ENCODE measurements at regions of chr7 and their contacts with region 1.

Region 1: DNA sequence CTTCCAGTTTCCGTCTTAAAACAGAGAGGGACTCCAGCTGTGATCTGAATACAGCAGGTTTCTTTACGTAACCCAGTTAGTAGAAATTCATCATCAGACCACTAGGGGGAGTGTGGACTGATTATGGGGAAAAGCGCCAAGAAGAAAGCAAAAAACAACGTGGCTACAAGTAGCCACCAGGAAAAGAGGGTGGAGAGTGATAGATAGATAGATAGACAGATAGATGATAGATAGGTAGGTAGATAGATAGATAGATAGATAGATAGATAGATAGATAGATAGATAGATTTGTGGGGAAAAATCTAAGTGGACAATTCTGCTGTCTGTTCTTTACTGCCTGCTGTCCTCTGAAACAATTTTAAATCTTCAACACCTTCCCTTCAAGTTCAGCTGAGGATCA is 12.7 kb upstream of the AKR1B10 start:
- ATAC-seq: peak in 4 of 8 experiments; percentile 52 to 81 (median 58)
- H3K4me3 ChIP-seq: no peak overlapping the region
- H3K27ac ChIP-seq: no peak overlapping the region
- H3K4me1 ChIP-seq: no peaks in the 10 kb centered on the region

Region 2: GRCh38 chr7:134432296-134433152 is 82.1 kb before region 1 on chr7:
- in situ Hi-C with region 1: loop called in 1 of 9 experiments (anchors 10 kb)
- ATAC-seq: peak; percentile 94 to 99 (median 98)
- H3K4me3 ChIP-seq: peak overlapping the region; percentile 12 to 24 (median 19)
- H3K27ac ChIP-seq: no peak overlapping the region
- H3K4me1 ChIP-seq: peaks cover 0 to 3% of the 10 kb centered on the region in 2 donors

Region 3: DNA sequence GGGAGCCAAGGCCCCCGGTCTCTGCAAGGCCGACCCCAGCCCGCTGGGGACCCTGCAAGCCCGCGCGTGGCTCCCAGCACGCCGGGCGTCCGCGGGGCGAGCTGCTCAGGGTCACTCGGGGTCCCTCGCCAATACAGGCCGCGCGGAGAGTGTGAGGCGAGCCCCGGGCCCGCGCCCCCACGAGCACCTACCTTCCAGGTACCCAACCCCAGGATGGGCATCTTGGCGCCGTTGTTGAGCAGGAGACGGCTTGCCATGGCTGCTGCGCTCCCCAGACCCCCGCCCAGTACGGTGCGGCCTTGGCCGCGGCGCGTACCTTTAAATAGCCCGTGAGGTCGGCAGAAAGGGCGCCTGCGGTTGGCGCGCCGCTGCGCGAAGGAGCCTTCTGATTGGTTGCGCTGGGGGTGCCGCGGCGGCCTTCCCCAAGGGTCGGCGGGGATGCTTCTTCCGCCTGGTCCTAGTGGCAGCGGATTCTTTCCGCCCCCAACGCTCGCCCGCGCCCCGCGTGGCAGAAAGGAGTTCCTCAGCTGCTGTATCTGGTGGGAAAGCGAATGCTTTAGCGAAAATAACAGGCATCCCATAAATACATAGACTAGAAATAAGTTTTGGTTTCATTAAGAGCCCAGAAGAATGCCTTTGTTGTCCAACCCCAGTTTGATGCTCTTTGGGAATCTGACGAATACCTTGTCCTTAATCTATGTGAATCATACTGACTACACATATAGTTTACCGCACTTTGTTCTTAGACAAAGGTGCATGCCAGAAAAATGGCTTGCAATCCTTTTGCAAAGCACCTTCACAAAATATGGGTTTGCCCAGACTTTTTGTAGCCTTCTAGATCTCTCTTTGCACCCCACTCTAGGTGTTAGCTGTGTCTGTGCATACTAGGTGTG is 55.6 kb before region 1 on chr7 and contains the start of gene AKR1B1:
- in situ Hi-C with region 1: no loop called
- ATAC-seq: peak; percentile 95 to 98 (median 96)
- H3K4me3 ChIP-seq: peak within 1 kb of the TSS; percentile 50 to 98 (median 77)
- H3K27ac ChIP-seq: peak within 1 kb of the TSS in 1 of 2 donors; percentile 43
- H3K4me1 ChIP-seq: peaks cover 4 to 5% of the 10 kb centered on the region in 2 donors
- total RNA-seq, gene AKR1B1: 33.7 to 104 (median 46.1) TPM

Region 4: DNA sequence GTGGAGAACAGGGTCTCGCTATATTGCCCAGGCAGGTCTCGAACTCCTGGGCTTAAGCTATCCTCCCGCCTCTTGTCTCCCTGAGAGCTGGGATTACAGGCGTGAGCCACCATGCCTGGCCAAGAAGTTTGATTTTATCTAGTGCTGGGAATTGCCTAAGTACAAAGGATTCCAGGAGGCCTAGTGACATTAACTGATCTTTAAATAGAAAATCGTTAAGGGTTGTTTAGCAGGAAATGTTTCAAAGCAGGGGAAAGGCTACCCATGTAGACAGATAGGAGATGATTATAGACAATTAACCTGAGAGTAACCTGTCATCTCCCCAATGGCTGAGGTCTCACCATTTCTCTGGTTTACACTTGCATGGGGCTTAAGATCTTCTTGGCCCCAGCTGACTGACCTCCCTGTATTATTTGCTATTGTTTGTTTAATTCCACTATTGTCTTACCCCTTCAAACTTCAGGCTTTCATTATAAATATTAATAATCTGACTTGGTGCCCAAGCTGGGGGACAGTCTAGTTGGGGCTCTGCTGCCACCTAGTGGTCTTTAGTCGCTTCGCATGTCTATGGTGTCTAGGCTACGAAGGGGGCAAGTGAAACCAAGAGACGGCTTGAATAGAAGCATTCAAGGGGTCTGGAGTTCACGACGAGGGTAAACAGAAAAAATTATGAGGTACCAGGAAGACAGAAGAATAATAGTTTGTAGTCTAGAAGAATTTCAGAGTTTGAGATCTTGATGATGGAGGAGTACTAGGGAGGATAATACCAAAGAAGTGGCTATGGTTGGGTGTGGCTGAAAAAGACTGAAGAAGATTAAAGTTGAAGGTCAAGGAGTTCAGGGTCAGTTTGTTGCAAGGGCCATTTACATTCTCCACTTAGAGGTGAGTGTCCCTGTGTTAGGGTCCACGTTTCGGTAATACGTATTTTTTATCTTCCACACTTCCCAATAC is 91.6 kb after region 1 on chr7:
- in situ Hi-C with region 1: loop called in 2 of 9 experiments (anchors 10 to 25 kb)
- ATAC-seq: peak; percentile 70 to 98 (median 84)
- H3K4me3 ChIP-seq: no peak overlapping the region
- H3K27ac ChIP-seq: no peak overlapping the region
- H3K4me1 ChIP-seq: no peaks in the 10 kb centered on the region

Region 5: DNA sequence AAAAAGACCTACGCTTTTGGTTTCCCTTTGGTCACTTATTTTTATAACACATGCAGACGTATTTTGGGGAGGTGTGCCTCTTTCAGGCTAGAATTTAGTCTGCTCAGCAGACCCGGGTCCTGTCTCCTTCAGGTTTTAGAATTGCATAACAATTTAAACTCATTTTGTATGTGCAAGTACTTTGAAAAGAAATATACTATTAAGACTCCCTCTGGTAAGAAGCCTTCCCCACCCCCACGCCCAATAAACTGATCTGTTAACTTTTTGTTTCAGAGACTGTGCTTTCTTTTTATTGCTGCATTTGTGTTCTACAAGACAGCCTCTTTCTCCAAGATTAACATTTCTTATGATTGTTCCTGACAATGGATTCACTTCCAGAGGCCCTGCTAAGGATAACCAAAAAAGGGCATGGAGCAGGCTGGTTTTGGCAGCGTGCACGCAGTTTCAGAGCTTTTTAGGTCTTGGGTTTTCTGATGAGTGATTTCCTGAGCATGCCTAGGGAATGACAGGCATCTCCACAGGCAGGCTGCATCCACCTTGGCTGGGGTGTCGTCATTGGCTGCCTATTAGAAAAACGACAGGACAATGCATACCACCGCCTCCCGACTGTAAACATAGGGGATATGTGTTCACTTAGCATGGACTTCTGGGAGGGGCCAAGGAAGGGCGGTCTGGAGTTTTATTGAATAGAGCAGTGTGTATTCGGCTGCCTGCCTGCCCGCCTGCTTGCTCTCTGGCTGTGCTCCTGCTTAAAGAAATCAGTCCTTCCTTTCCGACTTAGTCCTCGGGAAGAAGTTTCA is 264.5 kb after region 1 on chr7 and contains the start of gene CALD1:
- in situ Hi-C with region 1: no loop called
- ATAC-seq: peak; percentile 89 to 99 (median 98)
- H3K4me3 ChIP-seq: peak within 1 kb of the TSS; percentile 23 to 40 (median 32)
- H3K27ac ChIP-seq: no peak within 1 kb of the TSS
- H3K4me1 ChIP-seq: peaks cover 4 to 8% of the 10 kb centered on the region in 2 donors
- total RNA-seq, gene CALD1: 6.9 to 204 (median 64.7) TPM

Measured in motor neuron (in vitro differentiated cells).